MCF 10A (cell line): ENCODE measurements at regions of chr7 and their contacts with region 1.

Region 1: GRCh38 chr7:33459340-33459751 is 330.0 kb downstream of the BBS9 start:
- DNase-seq: peak; percentile 58
- H3K4me3 Mint-ChIP-seq: no peak overlapping the region
- H3K27ac Mint-ChIP-seq: no peak overlapping the region
- H3K4me1 Mint-ChIP-seq: no peaks in the 10 kb centered on the region
- H3K27me3 Mint-ChIP-seq: no peaks in the 10 kb centered on the region
- CTCF ChIP-seq: peak; percentile 26

Region 2: GRCh38 chr7:32479574-32480200 is 979.7 kb before region 1 on chr7:
- CTCF ChIA-PET with region 1: no interaction called
- POLR2A ChIA-PET with region 1: no interaction called
- intact Hi-C with region 1: no loop called
- DNase-seq: peak; percentile 63
- H3K4me3 Mint-ChIP-seq: no peak overlapping the region
- H3K27ac Mint-ChIP-seq: no peak overlapping the region
- H3K4me1 Mint-ChIP-seq: peaks cover 9% of the 10 kb centered on the region
- H3K27me3 Mint-ChIP-seq: no peaks in the 10 kb centered on the region
- CTCF ChIP-seq: peak; percentile 85

Region 3: GRCh38 chr7:33444511-33444910 is 14.8 kb before region 1 on chr7:
- CTCF ChIA-PET with region 1: interaction called, 11 read pairs
- POLR2A ChIA-PET with region 1: no interaction called
- intact Hi-C with region 1: no loop called
- DNase-seq: peak; percentile 52
- H3K4me3 Mint-ChIP-seq: no peak overlapping the region
- H3K27ac Mint-ChIP-seq: no peak overlapping the region
- H3K4me1 Mint-ChIP-seq: no peaks in the 10 kb centered on the region
- H3K27me3 Mint-ChIP-seq: no peaks in the 10 kb centered on the region
- CTCF ChIP-seq: no peak

Region 4: DNA sequence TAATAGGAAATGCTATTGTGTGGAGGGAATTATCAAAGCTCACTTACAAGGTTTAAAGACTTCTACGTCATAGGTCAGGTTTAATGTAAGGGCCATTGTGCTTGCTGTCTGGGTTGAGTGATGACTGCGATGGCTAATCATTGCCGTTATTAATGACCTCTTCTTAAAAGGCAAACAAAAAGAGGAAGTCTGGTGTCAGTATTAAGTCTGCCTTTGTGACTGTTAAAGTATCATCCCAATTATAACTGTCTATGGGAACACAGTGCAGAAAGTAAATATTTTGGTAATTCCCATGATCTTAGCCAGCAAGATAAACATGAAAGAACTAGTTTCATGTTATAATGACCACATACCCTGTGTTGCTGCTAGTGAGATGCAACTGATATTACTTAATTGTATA is 52.4 kb after region 1 on chr7:
- CTCF ChIA-PET with region 1: no interaction called
- POLR2A ChIA-PET with region 1: no interaction called
- intact Hi-C with region 1: no loop called
- DNase-seq: no peak
- H3K4me3 Mint-ChIP-seq: no peak overlapping the region
- H3K27ac Mint-ChIP-seq: no peak overlapping the region
- H3K4me1 Mint-ChIP-seq: no peaks in the 10 kb centered on the region
- H3K27me3 Mint-ChIP-seq: no peaks in the 10 kb centered on the region
- CTCF ChIP-seq: no peak